ENCODE measurements at regions of chr5 and their contacts with region 1.

Region 1: DNA sequence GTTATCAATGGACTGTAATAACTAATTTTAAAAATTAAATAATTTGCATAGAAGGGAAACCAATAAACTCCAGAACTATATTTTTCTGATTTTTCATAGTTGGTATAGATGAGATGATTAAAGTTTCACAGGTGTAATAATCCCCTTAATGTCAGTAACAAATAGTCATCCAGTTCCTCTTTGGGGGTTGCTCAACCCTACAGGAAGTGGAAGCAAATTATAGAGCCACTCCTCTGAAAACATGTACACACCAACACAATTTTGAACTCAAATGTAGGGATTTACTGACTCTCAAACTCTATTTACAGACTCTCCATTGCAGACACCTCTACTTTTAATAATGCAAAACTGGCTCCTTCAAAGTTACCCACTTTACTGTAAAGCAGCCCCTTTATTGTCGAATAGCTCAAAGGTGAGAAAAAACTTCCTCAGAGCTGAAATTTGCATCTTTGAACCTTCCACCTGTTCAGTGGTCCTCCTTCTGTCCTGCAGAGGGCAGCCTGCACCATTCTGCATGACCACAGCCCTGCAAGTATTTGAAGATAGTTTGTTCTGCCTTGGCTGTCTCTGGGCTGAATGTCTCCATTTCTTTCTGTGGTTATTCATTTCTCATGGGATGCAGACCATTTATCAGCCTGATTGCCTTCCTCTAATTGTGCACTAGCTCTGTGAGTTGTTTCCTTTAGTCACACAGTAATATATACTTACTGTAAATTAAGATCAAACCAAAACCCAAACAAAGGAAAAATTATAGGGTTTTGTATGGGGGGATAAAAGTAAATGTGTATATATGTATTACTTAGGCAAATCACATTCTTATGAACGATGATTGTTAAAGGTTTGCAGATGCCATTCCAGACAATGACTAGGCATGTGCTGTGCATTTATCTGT is 383.2 kb upstream of the SGCD start:
- DNase-seq: peak; percentile 72 to 77
- H3K4me3 ChIP-seq: no peak overlapping the region
- H3K27ac ChIP-seq: no peak overlapping the region
- H3K4me1 ChIP-seq: no peaks in the 10 kb centered on the region
- H3K27me3 ChIP-seq: no peaks in the 10 kb centered on the region
- CTCF ChIP-seq: peak in 5 of 6 experiments; percentile 63 to 89 (median 79)
- POLR2A ChIP-seq: no peak

Region 2: DNA sequence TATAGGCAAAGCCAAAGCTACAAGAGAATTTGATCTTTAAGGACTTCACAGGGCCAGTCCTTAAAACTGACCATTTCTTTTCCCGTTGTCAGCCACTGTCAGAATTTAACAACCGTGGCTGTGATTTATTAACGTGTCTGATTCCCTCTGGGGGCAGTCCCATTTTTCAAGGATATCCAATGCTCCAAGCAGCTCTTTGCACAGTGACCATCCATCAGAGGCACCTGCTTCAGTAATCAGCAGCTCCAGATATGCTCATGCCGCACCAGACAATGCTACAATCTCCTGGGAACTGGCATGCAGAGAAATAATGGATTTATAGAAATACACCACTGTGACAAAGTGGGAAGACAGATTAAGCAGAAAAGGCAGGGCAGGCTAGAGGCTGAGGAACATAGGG is 743.0 kb after region 1 on chr5:
- intact Hi-C with region 1: no loop called
- DNase-seq: no peak
- H3K4me3 ChIP-seq: no peak overlapping the region
- H3K27ac ChIP-seq: no peak overlapping the region
- H3K4me1 ChIP-seq: no peaks in the 10 kb centered on the region
- H3K27me3 ChIP-seq: no peaks in the 10 kb centered on the region
- CTCF ChIP-seq: no peak
- POLR2A ChIP-seq: no peak

Region 3: DNA sequence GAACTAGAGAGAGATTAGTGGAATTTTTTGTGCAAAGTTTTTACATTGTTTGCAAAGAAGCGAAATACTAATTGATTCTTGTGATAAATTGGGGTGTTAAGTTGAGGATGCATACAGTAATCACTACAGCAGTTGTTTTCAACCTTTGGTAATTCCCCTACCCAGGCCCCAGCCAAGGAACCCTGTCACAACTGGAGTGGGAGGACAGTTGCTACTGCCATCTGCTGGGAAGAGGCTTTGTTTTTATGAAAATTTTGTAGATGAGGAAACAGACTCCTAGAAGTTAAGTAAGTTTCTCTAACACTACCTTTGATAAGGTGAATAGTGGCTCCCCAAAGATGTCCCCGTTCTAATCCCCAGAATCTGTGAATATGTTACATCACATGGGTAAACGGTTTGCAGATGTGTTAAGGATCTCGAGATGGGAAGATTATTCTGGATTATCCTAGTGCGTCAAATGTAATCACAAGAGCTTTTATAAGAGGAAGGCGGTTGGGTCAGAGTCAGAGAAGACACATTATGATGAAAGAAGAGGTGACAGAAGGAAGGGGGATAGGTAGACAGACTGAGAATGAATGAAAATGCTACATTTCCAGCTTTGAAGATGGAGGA is 872.3 kb after region 1 on chr5:
- intact Hi-C with region 1: loop called (anchors 5 kb)
- DNase-seq: peak; percentile 10 to 39
- H3K4me3 ChIP-seq: no peak overlapping the region
- H3K27ac ChIP-seq: no peak overlapping the region
- H3K4me1 ChIP-seq: no peaks in the 10 kb centered on the region
- H3K27me3 ChIP-seq: no peaks in the 10 kb centered on the region
- CTCF ChIP-seq: peak in 4 of 6 experiments; percentile 37 to 57 (median 48)
- POLR2A ChIP-seq: no peak